ENCODE measurements at regions of chr1 and their contacts with region 1.

Region 1: DNA sequence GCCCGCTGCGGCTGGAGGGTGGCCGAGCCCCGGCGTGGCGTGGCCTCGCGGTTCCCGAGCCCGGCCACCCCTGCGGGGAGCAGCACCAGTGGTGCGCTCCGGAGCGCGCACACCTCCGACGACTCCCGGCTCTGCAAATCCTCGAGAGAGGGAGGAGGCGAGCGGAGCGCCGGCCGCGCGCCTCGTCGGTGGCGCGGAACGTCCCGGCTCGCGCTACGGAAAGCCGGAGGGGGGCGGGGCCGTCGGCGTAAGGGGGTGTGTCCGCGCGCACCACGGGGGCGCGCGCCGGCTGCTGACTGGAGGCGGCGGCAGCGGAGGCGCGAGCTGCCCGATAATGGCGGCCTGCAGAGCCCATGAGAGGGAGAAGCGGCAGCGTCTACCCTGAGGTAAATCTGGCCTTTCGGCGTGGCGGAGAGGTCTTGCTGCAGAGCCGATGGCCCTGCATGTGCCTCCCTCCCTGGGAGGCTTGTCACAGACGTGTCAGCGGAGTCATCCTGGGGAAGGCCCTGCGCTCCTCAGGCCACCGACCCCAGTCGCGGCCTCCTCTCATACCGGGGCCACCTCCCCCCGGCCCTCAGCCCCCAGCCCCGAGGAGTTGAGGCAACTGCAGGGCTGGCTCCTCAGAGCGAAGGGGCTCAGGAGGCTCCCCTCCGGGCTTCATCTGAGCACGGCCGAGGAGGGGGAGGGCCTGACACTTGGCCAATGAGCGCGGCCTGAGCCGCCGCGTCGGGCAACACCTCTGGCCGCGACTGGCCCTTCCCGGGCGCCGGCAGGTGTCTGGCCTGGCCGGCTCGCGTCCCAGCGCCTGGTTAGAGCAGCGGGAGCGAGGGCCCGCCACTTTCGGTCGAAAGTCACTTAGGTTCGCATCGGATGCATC is at the start of gene PDIK1L:
- DNase-seq: peak; percentile 98
- H3K4me3 Mint-ChIP-seq: peak within 1 kb of the TSS; percentile 90
- H3K27ac Mint-ChIP-seq: peak within 1 kb of the TSS; percentile 95
- H3K4me1 Mint-ChIP-seq: peaks cover 28% of the 10 kb centered on the region
- H3K27me3 Mint-ChIP-seq: no peaks in the 10 kb centered on the region
- total RNA-seq, gene PDIK1L: 15.8 and 18.7 TPM in 2 replicates

Region 2: GRCh38 chr1:25997828-25998761 is 113.7 kb before region 1 on chr1 and contains the start of gene PAFAH2:
- intact Hi-C with region 1: loop called (anchors 1 kb)
- DNase-seq: peak; percentile 99
- H3K4me3 Mint-ChIP-seq: peak within 1 kb of the TSS; percentile 92
- H3K27ac Mint-ChIP-seq: peak within 1 kb of the TSS; percentile 96
- H3K4me1 Mint-ChIP-seq: peaks cover 22% of the 10 kb centered on the region
- H3K27me3 Mint-ChIP-seq: peaks cover 2% of the 10 kb centered on the region
- total RNA-seq, gene PAFAH2: 6.8 and 7.6 TPM in 2 replicates

Region 3: DNA sequence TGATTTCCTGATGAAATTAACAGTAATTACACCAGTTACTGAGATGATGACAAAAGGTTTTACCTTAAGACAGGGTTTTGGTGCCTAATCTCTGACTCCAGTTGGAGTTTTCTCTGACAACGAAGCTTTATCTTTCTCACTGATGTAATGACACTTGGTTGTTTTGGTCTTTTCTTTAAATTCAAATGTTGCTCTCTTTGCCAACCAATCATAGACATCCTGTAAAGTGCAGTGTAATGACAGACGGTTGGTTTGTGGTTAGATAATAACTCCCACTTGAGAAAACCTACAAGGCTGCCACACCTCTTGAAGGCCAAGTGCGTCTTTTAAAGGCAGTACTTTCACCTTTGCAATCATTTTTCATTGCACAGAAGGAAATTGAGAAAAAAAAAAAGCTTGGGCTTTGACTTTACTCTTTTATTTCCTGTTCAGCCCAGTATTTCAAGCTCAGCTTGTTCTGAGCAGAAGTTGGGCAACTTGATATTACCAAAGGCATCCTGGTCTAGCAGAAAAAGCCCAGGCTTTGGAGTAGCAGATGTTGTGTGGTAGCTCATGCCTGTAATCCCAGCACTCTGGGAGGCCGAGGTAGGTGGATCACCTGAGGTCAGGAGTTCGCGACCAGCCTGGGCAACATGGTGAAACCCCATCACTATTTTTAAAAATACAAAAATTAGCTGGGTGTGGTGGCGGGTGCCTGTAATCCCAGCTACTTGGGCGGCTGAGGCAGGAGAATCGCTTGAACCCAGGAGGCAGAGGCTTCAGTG is 14.7 kb after region 1 on chr1:
- intact Hi-C with region 1: loop called (anchors 1 kb)
- DNase-seq: peak; percentile 91
- H3K4me3 Mint-ChIP-seq: peak overlapping the region; percentile 73
- H3K27ac Mint-ChIP-seq: peak overlapping the region; percentile 89
- H3K4me1 Mint-ChIP-seq: peaks cover 50% of the 10 kb centered on the region
- H3K27me3 Mint-ChIP-seq: no peaks in the 10 kb centered on the region

Region 4: DNA sequence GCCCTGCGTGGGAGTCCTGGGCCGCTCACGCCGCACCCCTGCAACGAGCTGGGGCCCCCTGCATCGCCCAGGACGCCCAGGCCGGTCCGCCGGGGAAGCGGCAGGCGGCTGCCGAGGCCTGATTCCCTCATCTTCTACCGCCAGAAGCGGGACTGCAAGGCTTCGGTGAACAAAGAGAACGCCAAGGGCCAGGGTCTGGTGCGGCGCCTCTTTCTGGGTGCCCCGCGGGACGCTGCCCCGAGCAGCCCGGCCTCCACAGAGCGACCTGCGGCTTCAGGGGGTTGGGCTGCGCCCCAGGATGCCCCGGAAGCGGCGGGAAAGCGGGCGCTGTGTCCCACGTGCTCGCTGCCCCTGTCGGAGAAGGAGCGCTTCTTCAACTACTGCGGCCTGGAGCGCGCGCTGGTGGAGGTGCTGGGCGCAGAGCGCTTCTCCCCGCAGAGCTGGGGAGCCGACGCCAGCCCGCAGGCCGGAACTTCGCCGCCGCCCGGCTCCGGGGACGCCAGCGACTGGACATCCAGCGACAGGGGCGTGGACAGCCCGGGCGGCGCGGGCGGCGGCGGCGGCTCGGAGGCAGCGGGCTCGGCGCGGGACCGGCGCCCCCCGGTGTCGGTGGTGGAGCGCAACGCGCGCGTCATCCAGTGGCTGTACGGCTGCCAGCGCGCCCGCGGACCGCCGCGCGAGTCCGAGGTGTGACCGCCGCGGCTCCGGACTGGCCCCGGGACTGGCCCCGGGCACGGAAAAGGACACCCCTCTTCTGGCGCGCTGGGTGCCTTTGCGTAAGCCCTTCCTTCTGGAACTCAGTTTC is 49.8 kb after region 1 on chr1:
- intact Hi-C with region 1: loop called (anchors 5 kb)
- DNase-seq: peak; percentile 82
- H3K4me3 Mint-ChIP-seq: peak overlapping the region; percentile 78
- H3K27ac Mint-ChIP-seq: no peak overlapping the region
- H3K4me1 Mint-ChIP-seq: peaks cover 23% of the 10 kb centered on the region
- H3K27me3 Mint-ChIP-seq: peaks cover 45% of the 10 kb centered on the region

Region 5: GRCh38 chr1:26279456-26280332 is 167.9 kb after region 1 on chr1 and contains the start of gene SH3BGRL3:
- intact Hi-C with region 1: loop called (anchors 5 kb)
- DNase-seq: peak; percentile 97
- H3K4me3 Mint-ChIP-seq: peak within 1 kb of the TSS; percentile 96
- H3K27ac Mint-ChIP-seq: peak within 1 kb of the TSS; percentile 97
- H3K4me1 Mint-ChIP-seq: peaks cover 74% of the 10 kb centered on the region
- H3K27me3 Mint-ChIP-seq: no peaks in the 10 kb centered on the region
- total RNA-seq, gene SH3BGRL3: 463 and 474 TPM in 2 replicates

Measured in activated CD4-positive, alpha-beta T cell treated with anti-CD3 and anti-CD28 coated beads, Interleukin-2, amount 10 ng/mL, durations not matched to agents 24 days and 14 days (primary cell).